ENCODE measurements at regions of chr17 and their contacts with region 1.

Region 1: DNA sequence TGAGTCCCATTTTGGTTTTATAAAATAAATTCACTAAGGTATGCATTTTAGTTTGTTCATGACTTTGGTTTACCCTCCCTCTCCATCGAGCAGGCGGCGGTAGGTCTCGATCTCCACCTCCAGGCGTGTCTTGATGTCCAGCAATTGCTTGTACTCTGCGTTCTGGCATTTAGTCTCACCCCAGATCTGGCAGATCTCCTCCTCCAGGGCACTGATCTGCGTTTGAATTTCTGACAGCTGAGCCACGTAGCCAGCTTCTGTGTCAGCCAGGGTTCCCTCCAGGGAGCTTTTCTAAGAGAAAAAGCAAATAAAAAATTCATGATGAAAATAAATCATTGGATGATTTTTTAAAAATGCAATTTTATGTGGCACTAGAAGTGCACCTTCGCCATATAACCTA is 4.2 kb downstream of the KRT24 start:
- DNase-seq: no peak
- H3K4me3 Mint-ChIP-seq: no peak overlapping the region
- H3K27ac Mint-ChIP-seq: no peak overlapping the region
- H3K4me1 Mint-ChIP-seq: peaks cover 46% of the 10 kb centered on the region
- H3K27me3 Mint-ChIP-seq: peaks cover 29% of the 10 kb centered on the region
- CTCF ChIP-seq: no peak

Region 2: DNA sequence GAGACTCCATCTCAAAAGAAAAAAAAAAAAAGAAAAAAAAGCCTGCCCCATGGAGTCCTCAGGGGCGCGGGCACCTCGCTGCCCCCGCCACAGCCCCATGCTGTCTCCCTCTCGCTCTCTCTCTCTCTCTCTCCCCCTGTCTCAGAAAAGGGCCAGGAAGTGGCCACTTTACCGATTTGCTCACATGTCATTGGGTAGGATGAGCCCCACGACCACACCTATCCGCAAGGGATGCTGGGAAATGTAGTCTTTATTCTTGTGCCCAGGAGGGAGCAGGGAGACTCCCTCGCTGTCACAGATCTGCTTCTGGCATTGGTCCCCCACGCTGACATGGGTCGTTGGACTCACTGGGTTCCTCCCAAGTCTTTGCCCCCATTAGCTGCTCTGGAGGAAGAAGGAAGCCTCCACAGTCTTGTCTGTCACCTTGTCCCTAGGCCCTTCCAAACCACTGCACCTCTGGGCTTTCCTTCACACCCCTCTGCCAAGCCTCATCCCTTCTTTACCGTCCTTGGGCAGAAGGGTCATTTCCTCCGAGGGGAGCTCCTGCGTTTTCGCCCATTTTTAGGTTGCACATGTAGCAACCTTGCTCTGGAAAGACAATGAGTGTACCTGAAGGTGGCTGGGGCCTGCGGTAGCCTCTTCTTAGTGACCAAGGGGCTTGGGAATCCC is 328.0 kb before region 1 on chr17:
- CTCF ChIA-PET with region 1: interaction called, 3 read pairs
- intact Hi-C with region 1: loop called (anchors 10 kb)
- DNase-seq: no peak
- H3K4me3 Mint-ChIP-seq: no peak overlapping the region
- H3K27ac Mint-ChIP-seq: no peak overlapping the region
- H3K4me1 Mint-ChIP-seq: peaks cover 25% of the 10 kb centered on the region
- H3K27me3 Mint-ChIP-seq: no peaks in the 10 kb centered on the region
- CTCF ChIP-seq: no peak

Region 3: DNA sequence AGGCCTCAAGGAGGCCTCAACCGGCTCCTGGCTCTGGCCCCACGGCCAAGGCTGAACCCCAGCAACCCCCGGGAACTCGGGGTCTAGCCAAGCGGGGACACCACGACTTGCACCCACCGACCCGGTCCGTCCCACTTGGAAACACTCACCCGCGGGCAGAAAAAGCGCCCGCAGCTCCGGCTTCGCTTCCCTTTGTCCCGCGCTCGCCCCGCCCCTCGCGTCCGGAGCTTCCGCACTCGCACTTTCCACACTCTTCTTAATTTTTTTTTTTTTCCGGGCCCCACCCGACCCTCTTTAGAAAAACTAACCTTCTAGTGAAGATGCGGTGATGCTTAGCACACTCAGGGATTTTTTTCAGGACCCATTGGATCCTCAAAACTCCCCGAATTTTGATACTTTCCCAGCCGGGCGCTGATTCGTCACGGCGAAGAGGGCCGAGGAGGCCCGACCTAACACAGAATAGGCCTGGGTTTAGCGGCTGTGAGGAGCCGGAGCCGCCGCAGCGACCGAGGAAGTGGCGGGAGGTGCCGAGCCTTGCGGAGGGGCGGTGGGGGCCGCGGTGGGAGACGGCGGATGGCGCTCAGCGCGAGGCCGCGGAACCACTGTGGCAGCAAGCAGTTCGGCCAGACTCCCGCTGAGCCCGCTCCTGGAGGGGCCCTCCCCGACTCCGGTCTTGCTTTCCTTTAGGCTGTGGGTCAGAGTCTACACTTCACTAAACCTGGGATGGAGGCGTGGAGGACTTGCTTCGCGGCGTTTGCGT is 51.6 kb before region 1 on chr17 and contains the start of gene SMARCE1:
- CTCF ChIA-PET with region 1: interaction called, 36 read pairs
- intact Hi-C with region 1: loop called (anchors 1 kb)
- DNase-seq: peak; percentile 98
- H3K4me3 Mint-ChIP-seq: peak within 1 kb of the TSS; percentile 74
- H3K27ac Mint-ChIP-seq: peak within 1 kb of the TSS; percentile 87
- H3K4me1 Mint-ChIP-seq: peaks cover 29% of the 10 kb centered on the region
- H3K27me3 Mint-ChIP-seq: no peaks in the 10 kb centered on the region
- CTCF ChIP-seq: no peak
- total RNA-seq, gene SMARCE1: 755 and 768 TPM in 2 replicates

Region 4: GRCh38 chr17:40671282-40671681 is 28.1 kb before region 1 on chr17:
- CTCF ChIA-PET with region 1: interaction called, 145 read pairs
- intact Hi-C with region 1: no loop called
- DNase-seq: peak; percentile 19
- H3K4me3 Mint-ChIP-seq: no peak overlapping the region
- H3K27ac Mint-ChIP-seq: no peak overlapping the region
- H3K4me1 Mint-ChIP-seq: peaks cover 5% of the 10 kb centered on the region
- H3K27me3 Mint-ChIP-seq: peaks cover 82% of the 10 kb centered on the region
- CTCF ChIP-seq: no peak

Region 5: DNA sequence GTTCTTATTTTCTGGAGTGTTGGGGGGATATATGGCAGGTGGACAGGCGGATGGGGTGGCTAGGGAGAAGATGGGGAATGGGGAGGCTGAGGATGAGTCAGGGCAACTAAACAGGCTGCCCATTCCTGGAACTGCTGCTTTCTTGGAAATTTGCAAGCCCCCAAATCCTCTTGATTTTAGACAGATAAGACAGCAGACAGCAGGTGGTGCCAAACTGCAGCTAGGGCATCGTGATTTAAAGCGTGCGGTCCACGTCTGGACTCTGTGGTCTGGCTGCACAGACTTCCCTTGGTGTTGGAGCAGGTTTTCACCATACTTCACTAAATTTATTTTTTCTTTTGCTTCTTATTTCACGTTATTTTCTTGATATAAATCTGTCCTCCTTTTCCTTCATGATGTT is 15.1 kb after region 1 on chr17:
- CTCF ChIA-PET with region 1: interaction called, 205 read pairs
- intact Hi-C with region 1: no loop called
- DNase-seq: no peak
- H3K4me3 Mint-ChIP-seq: no peak overlapping the region
- H3K27ac Mint-ChIP-seq: no peak overlapping the region
- H3K4me1 Mint-ChIP-seq: no peaks in the 10 kb centered on the region
- H3K27me3 Mint-ChIP-seq: peaks cover 60% of the 10 kb centered on the region
- CTCF ChIP-seq: peak; percentile 66

Region 6: DNA sequence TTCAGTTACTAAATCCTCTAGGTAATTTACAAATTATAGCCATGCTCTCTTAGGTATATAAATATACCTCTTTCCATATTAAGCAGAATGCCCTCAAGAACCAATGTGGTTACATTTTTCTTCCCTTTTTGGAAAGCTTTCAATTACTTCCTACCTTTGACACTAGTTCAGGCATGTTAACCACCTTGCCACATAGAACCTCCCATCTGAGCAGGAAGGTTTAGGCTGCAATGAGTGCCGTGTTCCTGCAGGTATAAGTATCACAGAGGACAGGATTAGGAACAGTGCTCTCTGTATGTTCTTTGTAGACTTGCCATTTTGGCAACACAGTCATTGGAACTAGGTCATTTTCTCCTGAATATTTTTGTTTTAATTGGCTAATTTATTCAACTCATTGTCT is 35.6 kb after region 1 on chr17:
- CTCF ChIA-PET with region 1: interaction called, 78 read pairs
- intact Hi-C with region 1: no loop called
- DNase-seq: no peak
- H3K4me3 Mint-ChIP-seq: no peak overlapping the region
- H3K27ac Mint-ChIP-seq: no peak overlapping the region
- H3K4me1 Mint-ChIP-seq: no peaks in the 10 kb centered on the region
- H3K27me3 Mint-ChIP-seq: peaks cover 88% of the 10 kb centered on the region
- CTCF ChIP-seq: no peak

Region 7: DNA sequence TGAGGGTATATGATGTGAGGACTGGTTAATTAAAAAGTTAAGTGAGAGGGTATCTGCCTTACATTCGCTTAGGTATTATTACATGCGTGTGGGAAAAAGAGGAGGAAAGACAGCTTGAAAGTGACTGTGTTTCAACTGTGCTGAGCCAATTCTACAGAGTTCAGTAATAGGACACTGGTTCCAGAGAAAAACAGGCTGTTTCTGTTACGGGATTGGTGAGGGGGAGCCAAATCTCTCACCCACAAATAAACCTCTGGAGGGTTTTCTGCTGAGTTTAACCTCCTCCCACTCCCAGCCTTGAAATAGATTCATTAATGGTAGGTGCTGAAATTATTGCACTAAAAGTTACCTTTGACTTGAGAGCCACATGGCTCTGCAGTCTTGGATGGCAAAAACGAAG is 76.6 kb after region 1 on chr17:
- CTCF ChIA-PET with region 1: interaction called, 8 read pairs
- intact Hi-C with region 1: loop called (anchors 5 kb)
- DNase-seq: no peak
- H3K4me3 Mint-ChIP-seq: no peak overlapping the region
- H3K27ac Mint-ChIP-seq: no peak overlapping the region
- H3K4me1 Mint-ChIP-seq: no peaks in the 10 kb centered on the region
- H3K27me3 Mint-ChIP-seq: peaks cover 83% of the 10 kb centered on the region
- CTCF ChIP-seq: no peak